Heart right ventricle (tissue), 16 donors: ENCODE measurements at regions of chr15 and their contacts with region 1.

Region 1: GRCh38 chr15:60086681-60087429 is 82.7 kb downstream of the FOXB1 start:
- DNase-seq: no peak
- ATAC-seq: no peak
- H3K4me3 ChIP-seq: no peak overlapping the region
- H3K27ac ChIP-seq: no peak overlapping the region
- H3K4me1 ChIP-seq: no peaks in the 10 kb centered on the region
- H3K27me3 ChIP-seq: peaks cover 0 to 32% (median 6%) of the 10 kb centered on the region in 7 donors
- CTCF ChIP-seq: no peak

Region 2: GRCh38 chr15:60035344-60035743 is 51.5 kb before region 1 on chr15:
- intact Hi-C with region 1: loop called in 1 of 10 experiments (anchors 5 kb)
- DNase-seq: no peak
- ATAC-seq: no peak
- H3K4me3 ChIP-seq: no peak overlapping the region
- H3K27ac ChIP-seq: no peak overlapping the region
- H3K4me1 ChIP-seq: no peaks in the 10 kb centered on the region
- H3K27me3 ChIP-seq: peaks cover 0 to 33% (median 19%) of the 10 kb centered on the region in 7 donors
- CTCF ChIP-seq: no peak

Region 3: DNA sequence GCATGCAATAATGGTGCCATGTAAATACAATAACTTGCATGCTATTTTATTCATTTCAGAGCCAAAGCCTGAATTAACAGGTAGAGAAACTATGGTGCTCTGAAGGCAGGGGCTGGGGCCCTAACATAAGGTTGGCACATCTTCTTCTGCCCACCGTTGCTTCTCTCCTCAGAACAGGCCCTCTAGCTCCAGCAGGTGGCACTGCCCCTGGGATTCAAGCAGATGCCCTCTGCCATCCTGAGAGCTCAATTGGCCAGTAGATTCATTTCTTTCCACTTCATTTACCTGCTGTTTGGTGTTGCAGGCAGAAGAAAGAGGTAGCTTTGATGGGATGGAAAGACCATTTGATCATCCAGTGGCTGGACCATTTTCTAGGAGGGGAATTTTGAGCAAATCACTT is 47.8 kb after region 1 on chr15:
- intact Hi-C with region 1: no loop called
- DNase-seq: no peak
- ATAC-seq: no peak
- H3K4me3 ChIP-seq: no peak overlapping the region
- H3K27ac ChIP-seq: no peak overlapping the region
- H3K4me1 ChIP-seq: no peaks in the 10 kb centered on the region
- H3K27me3 ChIP-seq: peaks cover 0 to 42% (median 18%) of the 10 kb centered on the region in 7 donors
- CTCF ChIP-seq: peak in 2 of 9 donors; percentile 9 to 11